IMR-90 (cell line): ENCODE measurements at regions of chr16 and their contacts with region 1.

Region 1: GRCh38 chr16:16127469-16128116 is 95.7 kb downstream of the ABCC6 start:
- DNase-seq: peak; percentile 66
- ATAC-seq: peak; percentile 90
- H3K4me3 ChIP-seq: no peak overlapping the region
- H3K27ac ChIP-seq: no peak overlapping the region
- H3K4me1 ChIP-seq: no peaks in the 10 kb centered on the region
- H3K27me3 ChIP-seq: no peaks in the 10 kb centered on the region
- CTCF ChIP-seq: peak; percentile 77
- POLR2A ChIP-seq: no peak
- RAD21 ChIP-seq: peak; percentile 83

Region 2: DNA sequence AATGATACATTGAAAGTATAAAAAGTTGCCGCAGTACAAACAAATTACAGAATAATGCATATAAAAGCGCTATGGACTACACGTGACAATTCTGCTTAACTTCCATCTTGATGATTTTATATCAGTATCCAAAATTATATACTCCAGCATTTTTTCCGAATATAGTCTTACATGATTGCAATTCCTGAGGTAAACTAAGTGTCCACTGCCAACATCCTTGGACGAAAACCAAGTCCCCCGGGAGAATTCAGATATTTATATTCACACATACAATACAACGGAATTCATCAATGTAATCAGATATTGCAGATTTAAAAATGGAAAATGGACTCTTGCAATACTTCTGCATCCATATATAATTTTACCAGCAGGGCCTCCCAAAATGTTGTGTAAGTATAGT is 261.9 kb before region 1 on chr16:
- CTCF ChIA-PET with region 1: no interaction called
- POLR2A ChIA-PET with region 1: no interaction called
- dilution Hi-C with region 1: no loop called
- in situ Hi-C with region 1: no loop called
- intact Hi-C with region 1: loop called (anchors 5 kb)
- DNase-seq: peak; percentile 73
- ATAC-seq: peak; percentile 56
- H3K4me3 ChIP-seq: no peak overlapping the region
- H3K27ac ChIP-seq: peak overlapping the region; percentile 98; the same call in 1 of the 2 replicates
- H3K4me1 ChIP-seq: peaks cover 9% of the 10 kb centered on the region
- H3K27me3 ChIP-seq: no peaks in the 10 kb centered on the region
- CTCF ChIP-seq: no peak
- POLR2A ChIP-seq: no peak
- RAD21 ChIP-seq: no peak

Region 3: GRCh38 chr16:16083421-16084156 is 44.0 kb before region 1 on chr16:
- CTCF ChIA-PET with region 1: no interaction called
- POLR2A ChIA-PET with region 1: no interaction called
- dilution Hi-C with region 1: no loop called
- in situ Hi-C with region 1: no loop called
- intact Hi-C with region 1: no loop called
- DNase-seq: peak; percentile 61
- ATAC-seq: no peak
- H3K4me3 ChIP-seq: no peak overlapping the region
- H3K27ac ChIP-seq: no peak overlapping the region
- H3K4me1 ChIP-seq: peaks cover 7% of the 10 kb centered on the region
- H3K27me3 ChIP-seq: no peaks in the 10 kb centered on the region
- CTCF ChIP-seq: no peak
- POLR2A ChIP-seq: no peak
- RAD21 ChIP-seq: no peak